ENCODE measurements at regions of chr10 and their contacts with region 1.

Region 1: DNA sequence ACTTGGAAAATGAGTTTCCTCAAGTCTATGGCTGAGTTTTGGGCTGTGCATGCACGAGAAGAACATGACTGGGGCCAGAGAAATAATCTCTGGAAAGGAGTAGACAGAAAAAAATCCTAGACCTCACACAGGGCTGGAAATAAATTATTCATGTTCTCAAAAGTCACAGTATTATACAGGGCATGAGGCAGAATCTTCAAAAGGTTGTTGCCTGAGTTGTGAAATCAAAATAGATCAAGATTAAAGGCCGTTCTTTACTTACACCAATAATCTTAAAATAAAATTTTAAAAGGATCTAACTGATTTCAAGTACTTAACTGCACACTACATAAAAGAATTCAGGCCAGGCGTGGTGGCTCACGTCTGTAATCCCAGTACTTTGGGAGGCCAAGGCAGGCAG is 14.1 kb upstream of the CREM start:
- DNase-seq: no peak
- ATAC-seq: no peak
- H3K4me3 ChIP-seq: no peak overlapping the region
- H3K27ac ChIP-seq: no peak overlapping the region
- H3K4me1 ChIP-seq: no peaks in the 10 kb centered on the region
- H3K27me3 ChIP-seq: no peaks in the 10 kb centered on the region
- CTCF ChIP-seq: no peak

Region 2: DNA sequence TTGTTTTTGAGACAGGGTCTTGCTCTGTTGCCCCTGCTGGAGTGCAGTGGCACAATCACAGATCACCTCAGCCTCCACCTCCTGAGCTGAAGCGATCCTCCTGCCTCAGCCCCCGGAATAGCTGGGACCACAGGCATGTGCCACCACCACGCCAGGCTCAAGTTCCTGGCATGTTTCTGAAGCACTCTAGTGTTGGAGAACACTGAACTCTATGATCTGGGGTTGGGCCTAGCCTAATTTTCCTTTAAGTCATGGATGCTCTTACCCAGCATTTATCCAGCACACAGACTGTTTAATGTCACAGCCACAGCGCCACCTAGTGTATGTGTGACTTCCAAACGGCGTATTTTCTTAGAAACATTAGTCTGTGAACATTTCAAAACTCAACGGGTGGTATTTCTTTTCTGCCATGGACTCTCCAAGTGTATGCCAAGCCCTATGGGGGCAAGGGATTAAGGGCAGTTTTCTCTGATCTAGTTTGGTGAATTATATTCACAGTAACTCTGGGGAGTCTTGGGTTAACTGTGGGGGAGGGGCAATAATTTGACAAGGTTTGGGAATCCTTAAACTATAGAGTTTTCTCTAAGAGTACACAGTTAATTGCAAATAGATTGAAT is 105.9 kb after region 1 on chr10:
- intact Hi-C with region 1: loop called in 1 of 3 experiments (anchors 10 kb)
- DNase-seq: peak in 5 of 6 donors; percentile 47 to 83 (median 75)
- ATAC-seq: peak; percentile 77 to 93 (median 88)
- H3K4me3 ChIP-seq: no peak overlapping the region
- H3K27ac ChIP-seq: no peak overlapping the region
- H3K4me1 ChIP-seq: no peaks in the 10 kb centered on the region
- H3K27me3 ChIP-seq: no peaks in the 10 kb centered on the region
- CTCF ChIP-seq: peak; percentile 49 to 88 (median 75)